ENCODE measurements at regions of chr11 and their contacts with region 1.

Region 1: DNA sequence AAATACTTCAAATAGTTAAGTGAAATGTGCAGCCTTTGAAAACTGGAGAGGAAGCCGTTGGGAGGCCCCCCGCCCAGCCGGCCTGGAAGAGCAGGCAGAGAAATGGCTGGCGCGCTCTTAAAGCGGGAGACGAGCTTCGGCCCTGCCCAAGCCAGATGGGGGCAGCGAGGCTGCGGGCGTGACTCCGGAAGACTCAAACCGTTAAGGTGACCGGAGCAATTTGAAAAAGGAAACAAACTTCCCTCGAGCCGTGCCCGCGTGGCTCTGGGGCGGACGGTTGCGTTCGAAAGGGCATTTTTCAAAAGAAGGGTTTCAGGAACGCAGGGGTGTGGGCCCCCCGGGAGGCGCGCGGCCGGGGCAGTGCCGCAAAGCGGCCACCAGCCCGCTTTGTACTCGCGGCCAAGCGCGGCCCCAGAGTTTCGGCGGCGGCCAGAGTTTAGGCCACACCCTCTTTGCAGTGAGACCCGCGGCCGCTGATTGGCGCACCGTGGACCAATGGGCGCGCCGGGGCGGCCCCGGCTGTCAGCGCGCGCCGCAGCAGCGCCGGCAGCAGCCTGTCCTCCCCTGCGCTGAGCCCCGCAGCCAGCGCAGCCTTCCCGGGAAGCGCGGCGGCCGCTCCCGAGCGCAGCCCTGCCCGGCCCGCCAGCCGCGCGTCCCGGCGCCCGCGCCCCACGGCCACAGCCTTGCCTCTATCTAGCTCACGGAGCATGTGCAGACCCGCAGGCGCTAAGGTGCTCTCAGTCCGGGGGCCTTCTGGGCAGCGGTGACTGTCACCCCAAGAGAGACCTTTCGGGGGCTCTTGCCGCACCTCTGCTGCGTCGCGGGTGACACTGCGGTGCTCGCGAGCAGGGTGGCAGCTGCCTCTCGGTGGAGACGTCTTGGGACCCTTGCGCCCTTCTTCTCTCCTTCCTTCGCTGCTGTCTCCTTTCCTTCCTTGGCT is at the start of gene NAV2:
- DNase-seq: peak; percentile 80 to 95
- H3K4me3 ChIP-seq: peak within 1 kb of the TSS; percentile 92 to 98
- H3K27ac ChIP-seq: peak within 1 kb of the TSS; percentile 97 to 98
- H3K4me1 ChIP-seq: peaks cover 0 to 16% of the 10 kb centered on the region in 2 donors
- H3K27me3 ChIP-seq: no peaks in the 10 kb centered on the region
- CTCF ChIP-seq: peak in 1 of 3 experiments; percentile 9
- total RNA-seq, gene NAV2: 62.6 TPM

Region 2: GRCh38 chr11:19577976-19578619 is 134.5 kb before region 1 on chr11:
- intact Hi-C with region 1: loop called (anchors 5 kb)
- DNase-seq: peak in 1 of 2 donors; percentile 91
- H3K4me3 ChIP-seq: peak overlapping the region in 1 of 2 donors; percentile 52
- H3K27ac ChIP-seq: peak overlapping the region; percentile 93 to 98
- H3K4me1 ChIP-seq: peaks cover 43 to 72% of the 10 kb centered on the region in 2 donors
- H3K27me3 ChIP-seq: no peaks in the 10 kb centered on the region
- CTCF ChIP-seq: peak in 1 of 3 experiments; percentile 29

Measured in ascending aorta (tissue), 2 donors.